Right ventricle myocardium superior (tissue), 1 donor: ENCODE measurements at regions of chr18 and their contacts with region 1.

Region 1: DNA sequence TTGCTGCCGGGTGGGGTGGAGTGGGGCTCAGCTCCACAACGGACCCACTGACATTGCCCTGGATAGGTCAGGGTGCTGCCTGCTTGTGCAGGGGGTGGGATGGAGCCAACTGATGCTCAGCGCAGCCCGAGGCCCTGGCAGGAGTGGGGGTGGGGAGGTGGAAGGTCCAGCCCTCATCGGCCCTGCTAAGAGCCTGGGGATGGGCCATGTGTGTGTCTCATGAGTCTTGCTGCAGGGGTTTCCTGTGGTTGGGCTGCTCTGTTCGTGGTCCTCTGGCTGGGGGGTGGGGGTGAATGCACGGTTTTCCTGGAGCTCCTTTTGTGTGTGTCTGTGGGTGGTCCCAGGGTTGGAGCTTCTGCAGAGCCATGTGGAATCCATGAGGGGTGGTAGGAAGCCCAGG is 39.4 kb upstream of the GALR1 start:
- DNase-seq: no peak
- ATAC-seq: no peak

Region 2: GRCh38 chr18:77054606-77055428 is 155.4 kb before region 1 on chr18:
- intact Hi-C with region 1: loop called (anchors 10 kb)
- DNase-seq: peak; percentile 93
- ATAC-seq: peak; percentile 81

Region 3: GRCh38 chr18:77501266-77501665 is 291.0 kb after region 1 on chr18:
- intact Hi-C with region 1: no loop called
- DNase-seq: no peak
- ATAC-seq: no peak